HEK293 (cell line): ENCODE measurements at regions of chr3 and their contacts with region 1.

Region 1: DNA sequence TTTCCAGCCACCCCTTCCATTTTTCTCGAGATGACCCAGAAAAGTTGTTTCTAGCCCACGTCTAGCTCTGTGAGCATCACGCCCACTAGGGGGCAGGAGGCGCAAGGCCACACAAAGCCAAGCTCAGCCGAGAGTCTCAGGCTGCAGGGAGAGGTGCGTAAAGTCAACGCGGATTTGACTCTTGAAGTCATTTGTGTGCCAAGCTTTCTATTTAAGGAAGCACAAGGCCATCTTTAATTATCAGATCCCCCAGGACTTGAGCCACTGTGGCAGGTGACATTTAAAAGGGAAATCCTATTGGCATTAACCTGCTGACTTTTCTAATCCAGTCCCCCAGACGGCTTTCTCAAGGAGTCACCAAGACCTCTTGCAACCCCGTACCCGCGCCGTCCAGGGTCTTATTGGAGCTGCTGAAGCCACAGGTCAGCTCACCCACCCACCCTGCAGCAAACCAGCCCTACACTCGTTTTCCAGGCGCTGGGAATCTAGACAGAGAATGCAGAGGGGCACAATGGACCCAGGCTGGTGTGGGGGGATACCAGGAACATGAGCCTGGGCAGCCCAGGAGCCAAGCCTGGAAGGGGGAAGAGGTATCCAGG is 62.1 kb downstream of the CAPN7 start:
- H3K4me3 ChIP-seq: no peak overlapping the region
- H3K27ac ChIP-seq: no peak overlapping the region
- H3K4me1 ChIP-seq: peaks cover 5% of the 10 kb centered on the region; the same call in 1 of the 2 replicates
- CTCF ChIP-seq: peak; percentile 73

Region 2: DNA sequence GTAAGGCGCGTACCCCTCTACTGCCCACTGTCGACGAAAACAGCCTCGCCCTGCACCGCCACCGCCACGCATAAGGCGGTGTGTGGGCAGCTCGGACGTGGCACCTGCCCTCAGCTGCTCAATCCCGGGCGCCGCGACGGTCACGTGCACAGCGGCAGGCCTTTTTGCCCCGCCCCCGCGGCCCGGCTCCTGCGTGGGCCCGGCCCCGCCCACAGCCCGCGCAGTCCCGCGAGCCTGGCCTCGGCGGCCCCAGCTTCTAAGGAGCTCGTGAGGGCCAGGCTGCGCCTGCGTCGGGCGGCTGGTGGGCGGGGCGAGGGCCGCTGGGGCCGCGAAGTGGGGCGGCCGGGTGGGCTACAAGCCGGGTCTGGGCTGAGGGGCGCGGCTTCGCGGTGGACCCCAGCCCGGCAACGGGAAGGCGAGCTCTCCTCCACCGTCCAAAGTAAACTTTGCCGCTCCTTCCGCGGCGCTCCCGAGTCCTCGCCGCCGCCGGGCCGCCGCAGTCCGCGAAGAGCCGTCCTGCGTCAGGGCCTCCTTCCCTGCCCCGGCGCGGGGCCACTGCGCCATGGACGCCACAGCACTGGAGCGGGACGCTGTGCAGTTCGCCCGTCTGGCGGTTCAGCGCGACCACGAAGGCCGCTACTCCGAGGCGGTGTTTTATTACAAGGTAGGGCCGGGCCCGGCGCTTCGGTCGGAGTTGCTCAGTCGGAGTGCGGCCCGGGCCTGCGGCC is 62.0 kb before region 1 on chr3 and contains the start of gene CAPN7:
- CTCF ChIA-PET with region 1: interaction called, 30 read pairs
- POLR2A ChIA-PET with region 1: no interaction called
- H3K4me3 ChIP-seq: peak within 1 kb of the TSS; percentile 97
- H3K27ac ChIP-seq: peak within 1 kb of the TSS; percentile 79
- H3K4me1 ChIP-seq: peaks cover 9% of the 10 kb centered on the region
- CTCF ChIP-seq: peak; percentile 94

Region 3: DNA sequence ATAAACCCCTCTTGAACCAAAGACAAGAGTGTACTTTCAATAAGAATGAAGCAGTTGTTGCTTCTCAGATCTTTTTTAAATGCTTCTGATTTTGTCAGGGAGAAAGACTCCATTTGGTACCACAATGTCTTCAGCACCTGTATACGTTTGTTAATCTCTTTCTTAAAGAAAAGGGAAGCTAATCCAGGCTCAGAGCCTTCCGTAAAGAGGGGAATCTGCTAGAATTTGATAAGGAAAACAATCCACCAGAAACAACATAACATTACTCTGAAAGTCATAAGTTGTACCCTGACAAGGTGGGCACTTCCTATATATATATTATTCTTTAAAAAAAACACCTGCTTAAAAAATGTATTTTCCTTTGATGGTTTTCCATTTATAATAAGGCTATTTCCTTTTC is 44.4 kb after region 1 on chr3:
- CTCF ChIA-PET with region 1: interaction called, 11 read pairs
- POLR2A ChIA-PET with region 1: no interaction called
- H3K4me3 ChIP-seq: no peak overlapping the region
- H3K27ac ChIP-seq: no peak overlapping the region
- H3K4me1 ChIP-seq: peaks cover 3% of the 10 kb centered on the region; the same call in 1 of the 2 replicates
- CTCF ChIP-seq: no peak

Region 4: GRCh38 chr3:15361494-15362212 is 93.5 kb after region 1 on chr3:
- CTCF ChIA-PET with region 1: interaction called, 14 read pairs
- POLR2A ChIA-PET with region 1: no interaction called
- H3K4me3 ChIP-seq: no peak overlapping the region
- H3K27ac ChIP-seq: no peak overlapping the region
- H3K4me1 ChIP-seq: peaks cover 3% of the 10 kb centered on the region; the same call in 1 of the 2 replicates
- CTCF ChIP-seq: no peak

Region 5: GRCh38 chr3:15384510-15385237 is 116.5 kb after region 1 on chr3:
- CTCF ChIA-PET with region 1: interaction called, 58 read pairs
- POLR2A ChIA-PET with region 1: interaction called, 3 read pairs
- H3K4me3 ChIP-seq: no peak overlapping the region
- H3K27ac ChIP-seq: no peak overlapping the region
- H3K4me1 ChIP-seq: no peaks in the 10 kb centered on the region
- CTCF ChIP-seq: no peak

Region 6: DNA sequence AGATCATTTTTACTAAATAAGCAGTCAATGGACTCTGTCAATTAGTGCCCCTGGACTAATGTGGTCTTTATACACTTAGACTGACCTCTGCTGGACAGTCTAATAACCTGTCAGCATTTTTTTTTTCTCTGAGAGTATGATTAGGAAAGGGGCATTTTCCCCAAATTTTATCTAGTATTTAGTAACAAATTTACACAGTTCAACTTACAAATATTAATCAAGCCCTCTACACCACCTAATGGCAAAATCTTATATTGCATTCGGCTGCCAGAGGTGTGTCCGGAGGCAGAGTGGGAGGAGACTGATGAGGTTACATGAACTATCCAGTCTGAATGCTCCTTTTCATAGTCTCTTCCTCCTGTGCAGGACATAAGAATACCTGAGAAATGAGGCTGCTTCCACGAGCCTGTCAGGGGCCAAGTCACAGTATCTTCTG is 289.4 kb after region 1 on chr3:
- CTCF ChIA-PET with region 1: interaction called, 10 read pairs
- POLR2A ChIA-PET with region 1: no interaction called
- H3K4me3 ChIP-seq: no peak overlapping the region
- H3K27ac ChIP-seq: no peak overlapping the region
- H3K4me1 ChIP-seq: no peaks in the 10 kb centered on the region
- CTCF ChIP-seq: peak; percentile 45